Activated CD8-positive, alpha-beta memory T cell treated with anti-CD3 and anti-CD28 coated beads, Interleukin-2, amount 10 ng/mL, durations not matched to agents 7 days and 5 days (primary cell): ENCODE measurements at regions of chr12 and their contacts with region 1.

Region 1: GRCh38 chr12:6470375-6471163 is at the start of gene VAMP1:
- DNase-seq: peak; percentile 99
- ATAC-seq: peak; percentile 89
- H3K4me3 Mint-ChIP-seq: peak within 1 kb of the TSS; percentile 87
- H3K27ac Mint-ChIP-seq: peak within 1 kb of the TSS; percentile 94
- H3K4me1 Mint-ChIP-seq: peaks cover 53% of the 10 kb centered on the region
- H3K27me3 Mint-ChIP-seq: peaks cover 8% of the 10 kb centered on the region
- total RNA-seq, gene VAMP1: 49.2 to 59.1 TPM

Region 2: DNA sequence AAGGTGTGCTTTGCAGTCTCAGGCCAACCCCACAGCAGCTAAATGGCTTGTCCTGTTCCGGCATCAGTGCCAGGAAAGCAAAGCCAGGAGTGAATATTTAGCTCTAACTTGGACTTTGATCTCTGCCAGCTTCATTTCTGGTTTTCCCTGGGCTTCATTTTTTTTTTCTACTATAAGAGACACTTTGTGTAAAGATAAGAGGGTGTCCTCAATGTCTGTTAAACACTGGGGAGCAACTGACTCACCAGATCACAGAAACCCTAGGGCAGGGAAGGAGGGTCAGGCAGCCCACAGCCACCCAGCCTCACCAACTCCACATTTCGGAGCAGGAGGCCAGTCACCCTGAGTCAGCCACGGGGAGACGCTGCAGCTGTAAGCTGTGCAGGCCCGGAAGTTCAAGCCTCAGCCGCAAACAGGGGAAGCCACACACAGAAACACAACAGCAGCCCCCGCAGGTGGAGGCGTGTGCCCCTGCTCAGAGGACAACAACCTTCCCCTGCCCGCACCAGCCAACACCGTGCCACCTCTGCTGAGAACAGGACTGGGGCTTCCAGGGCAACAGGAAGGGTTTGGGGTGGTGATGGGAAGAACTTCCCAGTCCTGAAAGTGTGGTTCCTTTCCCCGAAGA is 135.0 kb before region 1 on chr12:
- CTCF ChIA-PET with region 1: interaction called, 17 read pairs
- DNase-seq: peak; percentile 95
- ATAC-seq: peak; percentile 62
- H3K4me3 Mint-ChIP-seq: no peak overlapping the region
- H3K27ac Mint-ChIP-seq: no peak overlapping the region
- H3K4me1 Mint-ChIP-seq: peaks cover 53% of the 10 kb centered on the region
- H3K27me3 Mint-ChIP-seq: no peaks in the 10 kb centered on the region

Region 3: GRCh38 chr12:6434205-6435140 is 36.1 kb before region 1 on chr12:
- CTCF ChIA-PET with region 1: interaction called, 22 read pairs
- DNase-seq: peak; percentile 68
- ATAC-seq: peak; percentile 85
- H3K4me3 Mint-ChIP-seq: peak overlapping the region; percentile 58
- H3K27ac Mint-ChIP-seq: peak overlapping the region; percentile 86
- H3K4me1 Mint-ChIP-seq: peaks cover 49% of the 10 kb centered on the region
- H3K27me3 Mint-ChIP-seq: no peaks in the 10 kb centered on the region

Region 4: GRCh38 chr12:6451348-6452244 is 19.0 kb before region 1 on chr12 and contains the start of gene TAPBPL:
- CTCF ChIA-PET with region 1: interaction called, 22 read pairs
- DNase-seq: peak; percentile 90
- ATAC-seq: peak; percentile 84
- H3K4me3 Mint-ChIP-seq: peak within 1 kb of the TSS; percentile 97
- H3K27ac Mint-ChIP-seq: peak within 1 kb of the TSS; percentile 94
- H3K4me1 Mint-ChIP-seq: peaks cover 59% of the 10 kb centered on the region
- H3K27me3 Mint-ChIP-seq: no peaks in the 10 kb centered on the region
- total RNA-seq, gene TAPBPL: 49.1 to 53.0 TPM

Region 5: DNA sequence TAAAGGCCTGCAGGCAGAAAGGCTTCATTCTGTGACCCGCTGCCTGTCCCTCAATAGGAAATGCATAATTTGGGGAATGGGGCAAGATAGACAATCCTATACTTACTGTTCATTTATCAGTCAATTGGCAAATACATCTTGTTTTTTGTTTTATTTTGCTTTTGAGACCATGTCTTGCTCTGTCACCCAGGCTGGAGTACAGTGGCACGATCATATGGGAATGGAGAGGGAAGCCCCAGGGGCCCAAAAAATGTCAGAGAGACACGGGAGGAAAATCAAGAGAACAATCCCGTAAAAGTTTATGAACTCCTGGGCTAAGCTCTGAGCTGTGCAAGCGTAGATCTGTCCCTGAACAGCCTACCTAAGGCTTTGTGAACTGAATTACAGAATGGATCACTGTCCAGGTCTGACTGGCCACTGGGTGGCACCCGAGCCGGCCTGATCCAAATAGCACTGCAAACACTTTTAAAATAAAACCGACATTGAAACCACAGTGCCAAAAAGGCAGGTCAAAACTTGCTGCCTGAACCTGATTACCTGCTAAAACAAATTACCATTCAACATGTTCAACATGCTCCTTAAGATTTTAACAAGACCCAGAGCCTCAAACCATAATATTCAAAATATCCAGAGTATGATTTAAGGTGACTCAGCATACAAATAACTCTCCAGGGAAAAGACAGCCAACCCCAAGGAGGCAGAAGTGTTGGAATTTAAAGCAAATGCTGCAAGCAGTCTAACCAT is 265.1 kb after region 1 on chr12:
- CTCF ChIA-PET with region 1: no interaction called
- DNase-seq: peak; percentile 72
- ATAC-seq: peak; percentile 84
- H3K4me3 Mint-ChIP-seq: no peak overlapping the region
- H3K27ac Mint-ChIP-seq: peak overlapping the region; percentile 22
- H3K4me1 Mint-ChIP-seq: peaks cover 9% of the 10 kb centered on the region
- H3K27me3 Mint-ChIP-seq: no peaks in the 10 kb centered on the region